B cell (primary cell): ENCODE measurements at regions of chr17 and their contacts with region 1.

Region 1: DNA sequence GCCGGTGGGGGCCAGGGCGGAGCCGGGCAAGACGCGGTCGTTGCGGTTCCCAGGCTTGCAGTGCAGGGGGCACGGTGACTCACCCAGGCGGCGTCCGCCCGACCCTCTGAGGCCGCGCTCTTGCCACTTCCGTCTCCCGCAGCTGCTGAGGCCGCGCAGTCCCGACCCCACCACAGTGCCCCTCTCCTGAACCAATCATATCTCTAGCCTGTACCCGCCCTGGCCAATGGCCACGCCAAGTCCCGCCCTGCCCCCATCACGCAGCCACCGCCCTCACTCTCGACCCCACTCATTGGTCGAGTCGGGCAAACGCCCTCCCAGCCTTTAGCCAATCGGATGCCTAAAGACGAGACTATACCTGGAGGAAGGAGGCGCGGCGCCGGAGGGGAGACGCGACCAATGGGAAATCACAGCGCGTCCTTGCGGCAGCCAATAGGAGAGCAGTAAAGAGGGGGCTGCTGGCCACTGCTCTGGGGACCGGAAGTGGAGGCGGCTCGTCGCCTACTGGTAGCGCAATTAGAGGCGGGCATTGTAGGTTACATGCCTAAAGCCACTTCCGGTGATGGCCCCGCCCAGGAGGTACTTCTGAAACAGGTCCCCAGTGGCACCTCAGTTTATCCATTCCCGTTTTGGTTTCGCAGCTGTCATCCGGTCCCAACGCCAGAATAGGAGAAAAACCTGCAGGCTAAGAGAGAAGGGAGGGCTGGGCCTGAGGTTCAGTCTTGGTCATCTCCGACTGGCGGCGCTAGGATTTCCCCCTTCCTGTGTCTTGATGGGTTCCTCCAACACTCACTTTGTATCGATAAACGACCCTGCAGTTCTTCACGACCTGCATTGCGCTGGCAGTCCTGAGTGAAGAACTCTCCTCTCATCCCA is 3.5 kb upstream of the MTMR4 start:
- DNase-seq: peak; percentile 100
- ATAC-seq: peak; percentile 78
- H3K4me3 ChIP-seq: peak overlapping the region; percentile 88 to 99 (median 93)
- H3K4me3 Mint-ChIP-seq: peak overlapping the region; percentile 97
- H3K27ac ChIP-seq: peak overlapping the region; percentile 83 to 85
- H3K27ac Mint-ChIP-seq: peak overlapping the region; percentile 97
- H3K4me1 ChIP-seq: peaks cover 35 to 54% of the 10 kb centered on the region in 2 donors
- H3K4me1 Mint-ChIP-seq: peaks cover 43% of the 10 kb centered on the region
- H3K27me3 ChIP-seq: no peaks in the 10 kb centered on the region
- H3K27me3 Mint-ChIP-seq: no peaks in the 10 kb centered on the region
- CTCF ChIP-seq: no peak

Region 2: GRCh38 chr17:57255776-57256681 is 1261.9 kb before region 1 on chr17 and contains the start of gene MSI2:
- CTCF ChIA-PET with region 1: no interaction called
- POLR2A ChIA-PET with region 1: no interaction called
- intact Hi-C with region 1: loop called (anchors 5 kb)
- DNase-seq: peak; percentile 94
- ATAC-seq: peak; percentile 79
- H3K4me3 ChIP-seq: peak within 1 kb of the TSS; percentile 67 to 97 (median 76)
- H3K4me3 Mint-ChIP-seq: peak within 1 kb of the TSS; percentile 92
- H3K27ac ChIP-seq: peak within 1 kb of the TSS; percentile 65 to 66
- H3K27ac Mint-ChIP-seq: peak within 1 kb of the TSS; percentile 85
- H3K4me1 ChIP-seq: peaks cover 34 to 44% of the 10 kb centered on the region in 2 donors
- H3K4me1 Mint-ChIP-seq: peaks cover 38% of the 10 kb centered on the region
- H3K27me3 ChIP-seq: no peaks in the 10 kb centered on the region
- H3K27me3 Mint-ChIP-seq: no peaks in the 10 kb centered on the region
- CTCF ChIP-seq: no peak
- total RNA-seq, gene MSI2: 196 and 222 TPM in 2 replicates

Region 3: DNA sequence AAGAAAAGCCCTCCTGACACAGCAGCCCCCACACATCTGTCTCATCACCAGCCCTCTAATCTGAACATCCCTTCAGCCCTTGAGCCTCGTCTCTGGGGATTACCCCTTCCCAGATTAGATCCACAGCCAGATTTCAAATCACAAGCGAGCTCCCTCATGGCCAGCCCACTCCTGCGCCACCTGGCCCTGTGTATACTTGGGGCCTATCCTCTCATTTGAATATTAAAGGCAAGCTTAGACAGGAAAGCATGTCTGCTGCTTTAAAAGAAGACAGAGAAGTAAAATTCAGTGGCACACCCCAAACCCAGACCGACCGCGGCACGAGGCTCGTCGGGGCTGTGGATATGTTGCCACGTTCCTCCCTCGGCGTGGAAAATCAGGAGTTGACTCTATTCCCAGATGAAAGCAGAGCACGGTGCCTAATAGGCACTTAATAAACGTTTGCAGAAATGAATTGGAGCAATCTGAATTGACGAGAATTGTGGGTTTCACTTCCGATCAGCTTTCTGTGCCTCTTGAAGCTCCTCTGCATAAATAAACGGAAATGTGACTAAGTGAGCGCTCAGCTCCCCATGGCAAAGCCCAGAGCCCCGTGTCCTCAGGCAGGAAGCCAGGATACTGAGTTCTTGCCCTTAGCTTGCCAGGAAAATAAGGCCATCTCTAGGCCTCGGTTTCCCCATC is 880.8 kb before region 1 on chr17:
- CTCF ChIA-PET with region 1: no interaction called
- POLR2A ChIA-PET with region 1: no interaction called
- intact Hi-C with region 1: no loop called
- DNase-seq: peak; percentile 58
- ATAC-seq: peak; percentile 68
- H3K4me3 ChIP-seq: peak overlapping the region in 1 of 5 experiments; percentile 15
- H3K4me3 Mint-ChIP-seq: peak overlapping the region; percentile 82
- H3K27ac ChIP-seq: peak overlapping the region; percentile 26 to 34
- H3K27ac Mint-ChIP-seq: peak overlapping the region; percentile 96
- H3K4me1 ChIP-seq: peaks cover 7 to 23% of the 10 kb centered on the region in 2 donors
- H3K4me1 Mint-ChIP-seq: peaks cover 20% of the 10 kb centered on the region
- H3K27me3 ChIP-seq: no peaks in the 10 kb centered on the region
- H3K27me3 Mint-ChIP-seq: no peaks in the 10 kb centered on the region
- CTCF ChIP-seq: no peak

Region 4: DNA sequence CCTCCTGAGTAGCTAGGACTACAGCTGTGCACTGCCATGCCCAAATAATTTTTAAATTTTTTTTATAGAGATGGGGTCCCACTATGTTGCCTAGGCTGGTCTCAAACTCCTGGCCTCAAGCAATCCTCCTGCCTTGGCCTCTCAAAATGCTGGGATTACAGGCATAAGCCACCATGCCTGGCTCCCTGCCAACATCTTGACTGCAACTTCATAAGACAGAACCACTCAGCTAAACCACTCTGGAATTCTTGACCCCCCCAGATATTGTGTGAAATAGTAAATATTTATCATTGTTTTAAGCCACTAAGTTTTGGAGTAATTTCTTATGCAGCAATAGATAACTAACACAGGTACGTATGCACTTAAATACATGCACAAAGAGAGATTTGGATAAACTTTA is 408.8 kb before region 1 on chr17:
- CTCF ChIA-PET with region 1: no interaction called
- POLR2A ChIA-PET with region 1: no interaction called
- intact Hi-C with region 1: no loop called
- DNase-seq: no peak
- ATAC-seq: no peak
- H3K4me3 ChIP-seq: no peak overlapping the region
- H3K4me3 Mint-ChIP-seq: no peak overlapping the region
- H3K27ac ChIP-seq: no peak overlapping the region
- H3K27ac Mint-ChIP-seq: no peak overlapping the region
- H3K4me1 ChIP-seq: no peaks in the 10 kb centered on the region
- H3K4me1 Mint-ChIP-seq: no peaks in the 10 kb centered on the region
- H3K27me3 ChIP-seq: peaks cover 0 to 2% (median 0%) of the 10 kb centered on the region in 4 experiments
- H3K27me3 Mint-ChIP-seq: peaks cover 17% of the 10 kb centered on the region
- CTCF ChIP-seq: no peak

Region 5: GRCh38 chr17:58329035-58329809 is 188.8 kb before region 1 on chr17:
- CTCF ChIA-PET with region 1: no interaction called
- POLR2A ChIA-PET with region 1: interaction called, 6 read pairs
- intact Hi-C with region 1: loop called (anchors 2 kb)
- DNase-seq: peak; percentile 88
- ATAC-seq: peak; percentile 37
- H3K4me3 ChIP-seq: peak overlapping the region; percentile 81 to 100 (median 99)
- H3K4me3 Mint-ChIP-seq: peak overlapping the region; percentile 91
- H3K27ac ChIP-seq: peak overlapping the region; percentile 73 to 85
- H3K27ac Mint-ChIP-seq: peak overlapping the region; percentile 93
- H3K4me1 ChIP-seq: peaks cover 36 to 69% of the 10 kb centered on the region in 2 donors
- H3K4me1 Mint-ChIP-seq: peaks cover 61% of the 10 kb centered on the region
- H3K27me3 ChIP-seq: no peaks in the 10 kb centered on the region
- H3K27me3 Mint-ChIP-seq: no peaks in the 10 kb centered on the region
- CTCF ChIP-seq: peak; percentile 79

Region 6: DNA sequence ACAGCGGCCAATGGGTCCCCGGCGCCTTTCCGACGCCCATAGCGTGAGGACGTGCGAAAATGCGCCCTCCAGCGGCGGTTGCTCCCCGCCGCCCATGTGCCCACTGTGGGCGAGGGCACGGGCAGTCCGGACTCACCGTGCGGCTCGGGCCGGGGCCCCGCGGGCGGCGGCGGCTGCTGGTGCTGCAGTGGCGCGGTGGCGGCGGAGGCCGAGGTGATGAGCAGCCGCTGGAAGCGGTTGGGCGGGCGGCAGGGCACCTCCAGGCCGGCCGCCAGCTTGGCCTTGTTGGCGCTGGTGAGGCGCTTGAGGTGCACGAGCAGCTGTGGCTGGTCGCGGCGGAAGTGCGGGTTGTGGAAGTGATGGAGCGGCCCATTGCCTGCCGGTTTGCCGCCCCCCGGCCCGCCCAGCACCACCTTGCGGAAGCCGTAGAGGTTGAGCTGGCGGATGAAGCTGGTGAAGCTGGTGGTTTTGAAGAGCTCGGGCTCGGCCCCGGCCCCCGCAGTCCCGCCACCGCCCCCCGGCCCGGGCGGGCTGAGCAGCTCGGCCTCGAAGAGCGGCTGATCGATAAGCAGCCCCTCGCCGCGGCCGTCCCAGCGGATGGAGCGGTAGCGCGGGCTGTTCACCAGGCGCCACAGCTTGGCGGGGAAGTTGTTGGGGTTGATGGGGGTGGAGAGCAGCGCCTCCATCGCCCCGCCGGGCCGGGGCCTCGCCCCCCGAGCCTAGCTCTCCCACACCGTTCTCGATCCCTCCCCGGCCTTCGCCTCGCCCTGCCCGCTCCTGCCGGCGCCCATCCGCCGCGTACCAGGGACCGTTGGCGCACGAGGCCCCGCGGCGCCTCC is 30.2 kb before region 1 on chr17 and contains the start of gene HSF5:
- CTCF ChIA-PET with region 1: interaction called, 13 read pairs
- POLR2A ChIA-PET with region 1: interaction called, 5 read pairs
- intact Hi-C with region 1: loop called (anchors 1 kb)
- DNase-seq: peak; percentile 92
- ATAC-seq: peak; percentile 94
- H3K4me3 ChIP-seq: peak within 1 kb of the TSS in 4 of 5 experiments; percentile 40 to 60 (median 56)
- H3K4me3 Mint-ChIP-seq: peak within 1 kb of the TSS; percentile 86
- H3K27ac ChIP-seq: peak within 1 kb of the TSS; percentile 13 to 79
- H3K27ac Mint-ChIP-seq: peak within 1 kb of the TSS; percentile 83
- H3K4me1 ChIP-seq: peaks cover 6 to 11% of the 10 kb centered on the region in 2 donors
- H3K4me1 Mint-ChIP-seq: peaks cover 11% of the 10 kb centered on the region
- H3K27me3 ChIP-seq: no peaks in the 10 kb centered on the region
- H3K27me3 Mint-ChIP-seq: no peaks in the 10 kb centered on the region
- CTCF ChIP-seq: peak; percentile 81
- total RNA-seq, gene HSF5: 4.8 and 5.1 TPM in 2 replicates

Region 7: GRCh38 chr17:58587702-58588254 is 69.8 kb after region 1 on chr17:
- CTCF ChIA-PET with region 1: interaction called, 51 read pairs
- POLR2A ChIA-PET with region 1: no interaction called
- intact Hi-C with region 1: loop called (anchors 1 kb)
- DNase-seq: peak; percentile 78
- ATAC-seq: peak; percentile 81
- H3K4me3 ChIP-seq: no peak overlapping the region
- H3K4me3 Mint-ChIP-seq: no peak overlapping the region
- H3K27ac ChIP-seq: no peak overlapping the region
- H3K27ac Mint-ChIP-seq: no peak overlapping the region
- H3K4me1 ChIP-seq: peaks cover 0 to 5% of the 10 kb centered on the region in 2 donors
- H3K4me1 Mint-ChIP-seq: peaks cover 3% of the 10 kb centered on the region
- H3K27me3 ChIP-seq: no peaks in the 10 kb centered on the region
- H3K27me3 Mint-ChIP-seq: no peaks in the 10 kb centered on the region
- CTCF ChIP-seq: peak; percentile 91

Region 8: DNA sequence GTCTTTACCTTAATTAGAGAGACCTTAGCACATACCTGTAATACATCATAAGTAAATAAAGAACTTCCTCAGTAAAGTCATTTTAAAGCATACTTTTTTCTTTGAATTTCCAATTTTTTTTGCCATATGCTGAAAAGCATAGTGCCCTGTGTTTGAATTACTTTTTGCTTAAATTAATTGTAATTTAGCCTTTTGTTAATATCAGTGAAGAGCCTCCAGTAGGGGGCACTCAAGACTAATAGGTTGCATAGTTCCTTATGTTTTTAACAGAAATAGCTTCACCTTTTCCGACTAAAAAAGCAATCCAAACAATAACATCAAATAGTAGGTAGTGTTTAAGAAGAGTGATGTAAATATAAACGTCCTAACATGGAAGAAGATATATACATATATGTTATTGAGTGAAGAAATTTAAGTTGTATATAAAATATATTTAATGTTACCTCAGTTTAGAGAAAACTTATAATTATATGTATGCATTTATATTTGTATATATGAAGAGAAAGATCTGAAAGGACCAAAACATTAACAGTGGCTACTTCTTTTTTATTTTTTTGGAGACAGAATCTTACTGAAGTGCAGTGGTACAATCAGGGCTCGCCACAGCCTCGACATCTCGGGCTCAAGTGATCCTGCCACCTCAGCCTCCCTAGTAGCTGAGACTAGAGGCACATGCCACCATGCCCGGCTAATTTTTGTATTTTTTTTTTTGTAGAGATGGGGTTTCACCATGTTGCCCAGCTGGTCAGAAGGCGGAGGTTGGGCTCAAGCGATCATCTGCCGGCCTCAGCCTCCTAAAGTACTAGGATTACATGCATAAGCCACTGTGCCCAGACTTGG is 193.2 kb after region 1 on chr17:
- CTCF ChIA-PET with region 1: interaction called, 12 read pairs
- POLR2A ChIA-PET with region 1: no interaction called
- intact Hi-C with region 1: loop called (anchors 1 kb)
- DNase-seq: peak; percentile 71
- ATAC-seq: no peak
- H3K4me3 ChIP-seq: no peak overlapping the region
- H3K4me3 Mint-ChIP-seq: no peak overlapping the region
- H3K27ac ChIP-seq: no peak overlapping the region
- H3K27ac Mint-ChIP-seq: no peak overlapping the region
- H3K4me1 ChIP-seq: no peaks in the 10 kb centered on the region
- H3K4me1 Mint-ChIP-seq: peaks cover 6% of the 10 kb centered on the region
- H3K27me3 ChIP-seq: no peaks in the 10 kb centered on the region
- H3K27me3 Mint-ChIP-seq: no peaks in the 10 kb centered on the region
- CTCF ChIP-seq: peak; percentile 93

Region 9: DNA sequence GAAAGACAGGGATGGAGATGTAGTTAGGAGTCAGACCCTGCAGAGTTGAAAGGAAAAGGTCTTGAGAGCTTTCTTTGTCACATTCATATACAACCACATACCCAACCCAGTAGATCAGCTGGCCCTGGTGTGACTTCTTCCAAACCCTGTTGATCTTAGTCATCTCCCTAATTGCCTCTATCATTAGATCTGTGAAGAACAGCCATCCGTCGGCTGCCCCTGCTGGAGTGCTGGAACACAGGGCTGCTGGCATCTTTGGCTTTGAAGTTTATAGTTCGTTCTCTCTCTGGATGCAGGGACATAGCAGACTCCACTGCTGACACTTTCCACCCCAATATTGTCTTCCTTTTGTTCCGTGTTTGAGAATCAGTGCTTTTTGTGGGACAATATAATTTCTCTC is 681.4 kb after region 1 on chr17:
- CTCF ChIA-PET with region 1: no interaction called
- POLR2A ChIA-PET with region 1: no interaction called
- intact Hi-C with region 1: no loop called
- DNase-seq: no peak
- ATAC-seq: no peak
- H3K4me3 ChIP-seq: no peak overlapping the region
- H3K4me3 Mint-ChIP-seq: no peak overlapping the region
- H3K27ac ChIP-seq: no peak overlapping the region
- H3K27ac Mint-ChIP-seq: no peak overlapping the region
- H3K4me1 ChIP-seq: no peaks in the 10 kb centered on the region
- H3K4me1 Mint-ChIP-seq: no peaks in the 10 kb centered on the region
- H3K27me3 ChIP-seq: no peaks in the 10 kb centered on the region
- H3K27me3 Mint-ChIP-seq: no peaks in the 10 kb centered on the region
- CTCF ChIP-seq: no peak